PC-3 (cell line): ENCODE measurements at regions of chr1 and their contacts with region 1.

Region 1: GRCh38 chr1:147890177-147890790 is 12.3 kb upstream of the GJA8 start:
- DNase-seq: peak; percentile 97
- ATAC-seq: peak; percentile 86
- H3K4me3 ChIP-seq: no peak overlapping the region
- H3K27ac ChIP-seq: no peak overlapping the region
- H3K4me1 ChIP-seq: peaks cover 26% of the 10 kb centered on the region
- H3K27me3 ChIP-seq: no peaks in the 10 kb centered on the region
- CTCF ChIP-seq: peak; percentile 98

Region 2: GRCh38 chr1:147627435-147628110 is 262.7 kb before region 1 on chr1:
- CTCF ChIA-PET with region 1: interaction called, 3 read pairs
- POLR2A ChIA-PET with region 1: no interaction called
- intact Hi-C with region 1: loop called (anchors 5 kb)
- DNase-seq: peak; percentile 72
- ATAC-seq: peak; percentile 70
- H3K4me3 ChIP-seq: no peak overlapping the region
- H3K27ac ChIP-seq: no peak overlapping the region
- H3K4me1 ChIP-seq: no peaks in the 10 kb centered on the region
- H3K27me3 ChIP-seq: no peaks in the 10 kb centered on the region
- CTCF ChIP-seq: peak; percentile 97

Region 3: GRCh38 chr1:147717063-147717565 is 173.2 kb before region 1 on chr1:
- CTCF ChIA-PET with region 1: interaction called, 15 read pairs
- POLR2A ChIA-PET with region 1: interaction called, 6 read pairs
- intact Hi-C with region 1: loop called (anchors 2 kb)
- DNase-seq: peak; percentile 99
- ATAC-seq: peak; percentile 93
- H3K4me3 ChIP-seq: no peak overlapping the region
- H3K27ac ChIP-seq: peak overlapping the region; percentile 91
- H3K4me1 ChIP-seq: peaks cover 43% of the 10 kb centered on the region
- H3K27me3 ChIP-seq: no peaks in the 10 kb centered on the region
- CTCF ChIP-seq: no peak

Region 4: GRCh38 chr1:147723691-147724323 is 166.5 kb before region 1 on chr1:
- CTCF ChIA-PET with region 1: interaction called, 4 read pairs
- POLR2A ChIA-PET with region 1: interaction called, 5 read pairs
- intact Hi-C with region 1: loop called (anchors 1 kb)
- DNase-seq: peak; percentile 85
- ATAC-seq: peak; percentile 98
- H3K4me3 ChIP-seq: no peak overlapping the region
- H3K27ac ChIP-seq: no peak overlapping the region
- H3K4me1 ChIP-seq: peaks cover 19% of the 10 kb centered on the region
- H3K27me3 ChIP-seq: no peaks in the 10 kb centered on the region
- CTCF ChIP-seq: peak; percentile 95

Region 5: DNA sequence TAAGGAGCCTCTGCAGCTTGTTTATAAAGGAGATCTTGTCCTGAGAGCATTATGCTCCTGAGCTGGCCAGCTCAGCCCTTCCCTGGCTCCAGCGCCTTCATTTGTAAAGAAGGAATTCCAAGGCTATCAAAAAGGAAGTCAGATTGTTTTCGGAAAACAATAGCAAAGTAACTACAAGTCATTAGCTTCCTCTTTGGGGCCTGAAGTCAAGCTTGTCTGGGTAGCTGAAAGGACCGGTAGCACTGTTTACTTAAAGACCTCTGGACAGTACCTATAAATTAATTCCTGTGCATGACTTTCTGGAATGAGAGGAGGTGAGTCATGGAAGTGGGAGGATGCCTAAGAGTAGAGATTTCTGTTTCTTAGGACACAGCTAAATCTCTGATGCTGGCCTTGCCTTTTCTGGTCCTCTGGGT is 109.2 kb before region 1 on chr1:
- CTCF ChIA-PET with region 1: interaction called, 6 read pairs
- POLR2A ChIA-PET with region 1: no interaction called
- intact Hi-C with region 1: loop called (anchors 2 kb)
- DNase-seq: peak; percentile 95
- ATAC-seq: peak; percentile 97
- H3K4me3 ChIP-seq: no peak overlapping the region
- H3K27ac ChIP-seq: 0 out of 2 replicates have a peak overlapping the region, but pooled peaks have one; percentile 18
- H3K4me1 ChIP-seq: peaks cover 16% of the 10 kb centered on the region
- H3K27me3 ChIP-seq: no peaks in the 10 kb centered on the region
- CTCF ChIP-seq: no peak

Region 6: DNA sequence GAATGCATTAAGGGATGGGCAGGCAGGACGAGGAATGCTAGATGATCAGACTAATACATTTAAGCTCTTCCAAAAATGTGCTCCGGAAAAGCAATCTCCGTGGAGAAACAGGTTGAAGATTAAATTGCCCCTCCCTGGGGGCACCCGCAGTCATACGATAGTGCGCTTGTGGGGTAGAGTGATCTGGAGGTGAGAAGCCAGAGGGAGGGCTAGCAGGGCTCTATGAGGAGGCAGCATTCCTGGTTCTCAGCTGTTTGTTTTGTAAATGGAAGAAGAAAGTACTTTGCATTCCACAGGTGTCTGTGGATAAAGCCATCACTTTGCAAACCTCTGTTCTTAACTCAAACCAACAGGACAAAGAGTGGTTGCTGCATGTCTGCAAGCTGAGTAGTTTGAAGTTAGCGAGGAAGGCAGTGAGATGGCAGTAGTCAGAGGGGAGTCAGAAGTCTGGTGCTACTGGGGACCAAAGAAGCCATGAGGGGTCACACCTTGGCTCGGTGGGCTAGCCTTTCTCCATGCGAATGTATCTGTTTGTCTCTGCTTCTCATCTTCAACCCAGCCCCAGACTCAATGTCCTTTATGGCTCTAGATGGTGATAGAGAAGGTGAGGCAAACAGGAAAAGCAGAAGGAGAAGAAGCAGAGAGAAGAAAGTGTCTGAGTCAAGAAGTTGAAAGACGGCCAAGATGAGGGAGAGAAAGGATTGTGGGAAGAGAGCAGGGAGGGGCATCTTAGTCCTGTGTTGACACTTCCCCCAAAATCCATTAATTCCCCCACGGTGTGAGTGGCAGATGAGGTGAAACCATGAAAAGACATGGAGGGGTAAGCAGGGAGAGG is 52.9 kb before region 1 on chr1:
- CTCF ChIA-PET with region 1: no interaction called
- POLR2A ChIA-PET with region 1: no interaction called
- intact Hi-C with region 1: no loop called
- DNase-seq: no peak
- ATAC-seq: no peak
- H3K4me3 ChIP-seq: no peak overlapping the region
- H3K27ac ChIP-seq: no peak overlapping the region
- H3K4me1 ChIP-seq: peaks cover 16% of the 10 kb centered on the region
- H3K27me3 ChIP-seq: no peaks in the 10 kb centered on the region
- CTCF ChIP-seq: no peak

Region 7: GRCh38 chr1:147850759-147851508 is 39.4 kb before region 1 on chr1:
- CTCF ChIA-PET with region 1: no interaction called
- POLR2A ChIA-PET with region 1: no interaction called
- intact Hi-C with region 1: no loop called
- DNase-seq: peak; percentile 94
- ATAC-seq: peak; percentile 84
- H3K4me3 ChIP-seq: no peak overlapping the region
- H3K27ac ChIP-seq: peak overlapping the region; percentile 36
- H3K4me1 ChIP-seq: peaks cover 43% of the 10 kb centered on the region
- H3K27me3 ChIP-seq: no peaks in the 10 kb centered on the region
- CTCF ChIP-seq: no peak

Region 8: GRCh38 chr1:147924813-147925212 is 34.5 kb after region 1 on chr1:
- CTCF ChIA-PET with region 1: no interaction called
- POLR2A ChIA-PET with region 1: no interaction called
- intact Hi-C with region 1: no loop called
- DNase-seq: no peak
- ATAC-seq: no peak
- H3K4me3 ChIP-seq: no peak overlapping the region
- H3K27ac ChIP-seq: no peak overlapping the region
- H3K4me1 ChIP-seq: no peaks in the 10 kb centered on the region
- H3K27me3 ChIP-seq: no peaks in the 10 kb centered on the region
- CTCF ChIP-seq: no peak